ENCODE measurements at regions of chr18 and their contacts with region 1.

Region 1: DNA sequence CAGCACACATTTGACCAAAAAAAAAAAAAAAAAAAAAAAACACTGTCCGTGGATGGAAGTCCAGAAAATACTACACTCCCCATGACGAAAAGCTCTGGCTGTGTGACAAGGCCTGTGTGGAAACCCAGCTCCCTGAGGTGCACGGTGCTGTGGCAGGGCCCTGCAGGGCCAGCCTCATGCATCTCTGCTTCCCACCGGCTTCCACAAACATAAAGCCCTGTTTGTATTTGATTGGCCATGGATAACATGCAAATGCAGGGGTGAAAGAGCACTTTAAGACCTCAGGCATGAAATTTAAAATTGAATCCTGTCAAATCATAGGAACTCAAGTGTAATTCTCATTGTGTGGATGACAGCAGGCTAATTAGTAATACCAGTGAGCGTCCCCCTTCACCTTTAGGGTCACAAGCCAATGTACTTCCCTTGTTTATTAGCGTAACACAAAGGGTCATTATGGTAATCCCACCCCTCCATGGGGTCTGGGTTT is 757.2 kb downstream of the GALR1 start:
- DNase-seq: no peak
- ATAC-seq: no peak
- H3K4me3 ChIP-seq: no peak overlapping the region
- H3K27ac ChIP-seq: no peak overlapping the region
- H3K4me1 ChIP-seq: no peaks in the 10 kb centered on the region
- H3K27me3 ChIP-seq: peaks cover 0 to 18% (median 0%) of the 10 kb centered on the region in 4 donors
- CTCF ChIP-seq: no peak

Region 2: DNA sequence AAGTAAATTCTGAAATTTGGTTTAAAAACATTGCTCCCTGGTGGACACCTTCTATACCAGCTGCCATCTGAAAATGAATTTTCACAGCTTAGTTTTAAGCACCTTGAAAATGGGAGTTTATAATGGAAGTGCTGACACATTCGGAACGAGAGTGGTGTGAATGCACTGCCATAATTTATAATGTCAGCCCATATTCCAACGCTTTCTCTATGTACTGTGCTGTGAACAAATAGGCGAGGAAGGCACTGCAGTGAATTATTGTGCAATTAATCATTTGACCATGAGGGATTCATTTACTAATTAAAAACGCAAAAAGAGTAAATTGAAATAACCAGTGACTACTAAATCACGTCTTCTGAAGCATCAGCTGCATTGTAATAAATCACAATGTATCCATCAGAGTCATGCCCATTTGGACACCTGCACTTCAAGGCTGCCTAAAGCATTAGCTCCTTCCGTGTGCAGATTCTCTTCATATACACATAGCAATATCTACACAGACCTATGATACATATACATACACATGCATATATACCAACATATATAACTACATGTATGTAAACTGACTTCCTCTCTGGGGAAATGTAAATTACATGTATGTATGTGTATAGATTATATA is 57.4 kb before region 1 on chr18:
- intact Hi-C with region 1: loop called in 1 of 3 experiments (anchors 10 kb)
- DNase-seq: no peak
- ATAC-seq: no peak
- H3K4me3 ChIP-seq: no peak overlapping the region
- H3K27ac ChIP-seq: no peak overlapping the region
- H3K4me1 ChIP-seq: no peaks in the 10 kb centered on the region
- H3K27me3 ChIP-seq: peaks cover 0 to 6% (median 0%) of the 10 kb centered on the region in 4 donors
- CTCF ChIP-seq: no peak

Measured in pancreas (tissue), 10 donors.